ENCODE measurements at regions of chr1 and their contacts with region 1.

Region 1: GRCh38 chr1:205977402-205978014 is 25.7 kb downstream of the RAB7B start:
- DNase-seq: peak; percentile 89

Region 2: GRCh38 chr1:205919026-205919746 is 58.3 kb before region 1 on chr1:
- intact Hi-C with region 1: loop called (anchors 1 kb)
- DNase-seq: peak; percentile 92

Region 3: GRCh38 chr1:206050655-206051235 is 73.2 kb after region 1 on chr1:
- intact Hi-C with region 1: no loop called
- DNase-seq: no peak